ENCODE measurements at regions of chr1 and their contacts with region 1.

Region 1: GRCh38 chr1:162561037-162561616 is 395 bp upstream of the UAP1 start:
- DNase-seq: peak; percentile 65
- H3K4me3 ChIP-seq: peak overlapping the region; percentile 92
- CTCF ChIP-seq: no peak

Region 2: DNA sequence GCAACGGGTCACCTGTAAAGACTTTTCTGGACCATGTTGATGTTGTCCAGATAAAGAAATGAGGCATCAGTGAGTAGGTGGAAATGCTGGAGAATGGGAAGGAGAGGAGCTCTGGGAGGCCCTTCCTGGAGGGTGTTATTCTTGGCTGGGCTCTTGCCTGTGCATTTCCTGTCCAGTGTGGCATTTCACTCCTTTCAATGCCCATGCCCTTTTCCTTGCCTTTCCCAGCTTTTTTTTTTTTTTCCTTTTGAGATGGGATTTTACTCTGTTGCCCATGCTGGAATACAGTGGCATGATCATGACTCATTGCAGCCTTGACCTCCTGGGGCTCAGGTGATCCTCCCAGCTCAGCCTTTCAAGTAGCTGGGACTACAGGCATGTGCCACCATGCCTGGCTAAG is 479.8 kb before region 1 on chr1:
- CTCF ChIA-PET with region 1: no interaction called
- POLR2A ChIA-PET with region 1: no interaction called
- DNase-seq: no peak
- H3K4me3 ChIP-seq: no peak overlapping the region
- CTCF ChIP-seq: no peak

Region 3: DNA sequence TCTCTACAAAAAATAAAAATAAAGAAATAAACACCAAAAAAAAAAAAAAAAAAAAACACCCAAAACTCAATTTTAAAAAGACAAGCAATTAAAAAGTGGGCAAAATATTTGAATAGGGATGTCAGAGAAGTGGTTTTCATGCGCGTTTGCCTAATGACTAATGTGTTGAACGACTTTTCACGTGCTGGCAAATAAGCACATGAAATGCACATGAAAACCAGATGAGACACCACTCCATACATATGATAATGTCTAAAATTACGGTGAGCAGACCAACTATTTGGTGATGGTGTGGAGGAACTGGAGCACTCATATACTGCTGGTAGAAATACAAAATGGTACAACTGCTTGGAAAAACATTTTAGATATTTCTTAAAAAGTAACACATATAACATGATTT is 102.9 kb before region 1 on chr1:
- CTCF ChIA-PET with region 1: no interaction called
- POLR2A ChIA-PET with region 1: no interaction called
- DNase-seq: no peak
- H3K4me3 ChIP-seq: no peak overlapping the region
- CTCF ChIP-seq: no peak

Region 4: DNA sequence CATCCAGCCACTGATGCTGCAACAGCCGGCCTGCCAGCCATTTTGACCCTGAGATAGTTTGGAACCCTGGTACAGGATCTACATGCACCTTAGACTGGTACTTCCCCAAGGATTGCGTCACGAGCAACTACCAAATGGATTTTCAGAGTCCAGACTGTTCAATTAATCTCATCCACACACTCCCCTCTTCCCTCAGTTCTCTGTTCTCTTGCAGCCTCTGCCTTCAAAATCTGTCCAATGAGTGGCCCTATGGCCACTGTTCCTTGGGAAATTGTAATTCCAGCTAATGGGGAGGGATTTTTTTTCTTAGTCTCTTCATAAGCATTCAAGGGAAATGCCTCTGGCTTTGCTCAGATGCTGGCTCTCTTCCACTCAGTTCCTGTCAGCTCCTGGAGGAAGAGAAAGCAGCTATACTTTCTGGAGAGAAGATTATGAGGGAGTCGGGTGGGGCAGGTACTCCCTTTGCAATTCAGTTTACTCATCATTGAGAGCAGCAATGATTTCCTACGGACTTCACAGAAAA is 19.4 kb before region 1 on chr1:
- CTCF ChIA-PET with region 1: no interaction called
- POLR2A ChIA-PET with region 1: interaction called, 49 read pairs
- DNase-seq: peak; percentile 96
- H3K4me3 ChIP-seq: no peak overlapping the region
- CTCF ChIP-seq: no peak

Region 5: DNA sequence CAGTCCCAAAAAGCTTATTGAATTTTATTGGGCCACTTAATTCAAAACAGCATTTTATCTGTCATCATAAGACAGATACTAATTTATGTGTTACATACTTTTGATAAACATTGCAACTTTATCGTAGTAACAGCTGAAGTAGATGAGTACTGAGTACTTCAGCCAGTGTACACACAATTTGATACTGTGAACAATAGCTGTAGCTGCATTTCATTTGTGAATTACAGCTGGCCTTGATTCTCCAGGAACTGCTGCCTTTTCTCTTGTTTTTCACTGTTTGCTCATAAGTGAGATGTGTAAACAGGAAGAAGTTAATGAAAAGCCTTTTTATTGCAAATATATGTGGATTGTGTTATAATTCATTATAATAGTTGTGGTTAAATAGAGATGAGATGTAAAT is 10.6 kb after region 1 on chr1:
- CTCF ChIA-PET with region 1: no interaction called
- POLR2A ChIA-PET with region 1: interaction called, 10 read pairs
- DNase-seq: no peak
- H3K4me3 ChIP-seq: no peak overlapping the region
- CTCF ChIP-seq: no peak

Region 6: GRCh38 chr1:162627662-162628296 is 66.7 kb after region 1 on chr1:
- CTCF ChIA-PET with region 1: no interaction called
- POLR2A ChIA-PET with region 1: interaction called, 15 read pairs
- DNase-seq: no peak
- H3K4me3 ChIP-seq: no peak overlapping the region
- CTCF ChIP-seq: peak; percentile 24

Measured in AG04449 (cell line).